Activated naive CD4-positive, alpha-beta T cell treated with anti-CD3 and anti-CD28 coated beads for 36 hours (primary cell): ENCODE measurements at regions of chr22 and their contacts with region 1.

Region 1: GRCh38 chr22:45131749-45132148 is 32.0 kb upstream of the NUP50 start:
- DNase-seq: no peak
- H3K4me3 Mint-ChIP-seq: no peak overlapping the region
- H3K27ac Mint-ChIP-seq: no peak overlapping the region
- H3K4me1 Mint-ChIP-seq: peaks cover 28% of the 10 kb centered on the region
- H3K27me3 Mint-ChIP-seq: no peaks in the 10 kb centered on the region

Region 2: GRCh38 chr22:45163451-45164269 is 31.9 kb after region 1 on chr22 and contains the start of gene NUP50:
- CTCF ChIA-PET with region 1: interaction called, 3 read pairs
- intact Hi-C with region 1: loop called (anchors 2 kb)
- DNase-seq: peak; percentile 95
- H3K4me3 Mint-ChIP-seq: peak within 1 kb of the TSS; percentile 84
- H3K27ac Mint-ChIP-seq: peak within 1 kb of the TSS; percentile 96
- H3K4me1 Mint-ChIP-seq: peaks cover 61% of the 10 kb centered on the region
- H3K27me3 Mint-ChIP-seq: no peaks in the 10 kb centered on the region
- total RNA-seq, gene NUP50: 151 to 154 TPM

Region 3: DNA sequence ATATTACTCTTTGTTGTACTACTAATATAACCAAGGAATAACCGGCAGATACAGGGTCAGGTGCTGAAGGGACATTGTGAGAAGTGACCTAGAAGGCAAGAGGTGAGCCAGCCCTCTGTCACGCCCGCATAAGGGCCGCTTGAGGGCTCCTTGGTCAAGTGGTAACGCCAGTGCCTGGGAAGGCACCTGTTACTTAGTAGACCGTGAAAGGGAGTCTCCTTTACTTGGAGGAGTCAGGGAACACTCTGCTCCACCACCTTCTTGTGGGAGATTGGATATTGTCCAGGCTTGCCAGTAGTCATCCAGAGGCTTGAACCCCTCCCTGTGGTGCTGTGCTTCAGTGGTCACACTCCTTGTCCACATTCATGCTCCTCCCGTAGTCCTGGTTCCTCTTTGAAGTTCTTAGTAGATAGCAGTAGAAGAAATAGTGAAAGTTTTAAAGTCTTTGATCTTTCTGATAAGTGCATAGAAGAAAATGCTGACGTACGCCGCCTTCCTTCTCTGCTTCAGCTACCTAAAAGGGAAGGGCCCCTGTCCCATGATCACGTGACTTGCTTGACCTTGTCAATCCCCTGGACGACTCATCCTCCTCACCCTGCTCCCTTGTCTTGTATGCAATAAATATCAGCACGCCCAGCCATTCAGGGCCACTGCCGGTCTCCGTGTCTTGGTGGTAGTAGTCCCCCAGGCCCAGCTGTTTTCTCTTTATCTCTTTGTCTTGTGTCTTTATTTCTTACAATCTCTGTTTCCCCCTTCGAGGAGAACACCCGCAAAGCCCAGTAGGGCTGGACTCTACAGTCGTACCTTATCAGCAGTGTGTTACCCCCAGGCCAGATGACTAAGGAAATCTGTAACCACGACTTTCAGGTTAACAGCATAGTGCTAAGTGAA is 38.1 kb after region 1 on chr22:
- CTCF ChIA-PET with region 1: interaction called, 3 read pairs
- intact Hi-C with region 1: loop called (anchors 2 kb)
- DNase-seq: peak; percentile 69
- H3K4me3 Mint-ChIP-seq: peak overlapping the region; percentile 41
- H3K27ac Mint-ChIP-seq: peak overlapping the region; percentile 87
- H3K4me1 Mint-ChIP-seq: peaks cover 84% of the 10 kb centered on the region
- H3K27me3 Mint-ChIP-seq: no peaks in the 10 kb centered on the region